ENCODE measurements at regions of chr10 and their contacts with region 1.

Region 1: DNA sequence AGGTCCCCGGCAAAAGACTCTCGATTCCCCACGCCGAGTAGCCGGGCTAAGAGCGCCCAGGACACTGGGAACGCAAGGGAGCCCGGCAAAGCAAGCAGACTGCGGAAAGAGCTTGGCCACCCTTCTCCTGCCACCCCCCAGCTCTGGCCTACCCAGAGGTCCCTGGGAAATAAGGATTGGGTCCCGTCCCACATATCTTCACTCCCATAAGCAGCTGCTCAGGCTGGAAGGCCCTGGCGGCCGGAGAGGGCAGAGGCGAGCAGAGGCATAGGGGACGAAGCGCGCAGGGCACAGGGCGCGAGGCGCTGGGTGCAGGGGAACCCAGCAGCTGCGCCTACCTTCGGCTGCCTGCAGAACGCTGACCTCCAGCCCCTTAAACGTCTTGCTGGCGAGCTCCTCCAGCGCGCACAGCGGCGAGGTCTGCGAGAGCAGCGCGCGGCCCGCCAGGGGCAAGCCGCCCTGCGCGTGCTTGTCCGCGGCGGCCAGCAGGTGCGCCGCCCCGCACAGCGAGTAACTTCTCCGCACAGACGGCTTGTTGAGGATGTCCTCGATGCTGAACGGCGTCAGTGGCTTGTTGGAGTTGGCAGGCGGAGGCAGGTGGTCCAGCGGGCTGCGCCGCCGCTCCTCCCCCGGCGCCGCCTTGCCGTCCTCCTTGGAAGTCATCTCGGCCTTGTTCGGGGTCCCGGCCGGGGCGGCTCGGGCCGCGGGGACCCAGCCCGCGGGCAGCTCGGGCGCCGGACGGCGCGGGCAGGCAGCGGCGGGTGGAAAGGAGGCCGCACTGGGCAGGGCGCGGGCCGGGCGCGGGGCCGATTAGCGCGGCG is 900 bp downstream of the LBX1 start:
- DNase-seq: no peak
- ATAC-seq: no peak
- H3K4me3 ChIP-seq: no peak overlapping the region
- H3K4me3 Mint-ChIP-seq: peak overlapping the region; percentile 42 to 80 (median 74)
- H3K27ac ChIP-seq: no peak overlapping the region
- H3K27ac Mint-ChIP-seq: peak overlapping the region in 1 of 9 donors; percentile 79
- H3K4me1 ChIP-seq: peaks cover 27 to 48% of the 10 kb centered on the region in 2 donors
- H3K4me1 Mint-ChIP-seq: peaks cover 26 to 52% (median 40%) of the 10 kb centered on the region in 7 donors
- H3K27me3 ChIP-seq: peaks cover 18 to 54% of the 10 kb centered on the region in 2 donors
- H3K27me3 Mint-ChIP-seq: peaks cover 71 to 78% (median 74%) of the 10 kb centered on the region in 5 donors

Region 2: GRCh38 chr10:100653957-100654781 is 574.2 kb before region 1 on chr10:
- CTCF ChIA-PET with region 1: no interaction called
- POLR2A ChIA-PET with region 1: no interaction called
- intact Hi-C with region 1: loop called in 1 of 2 experiments (anchors 10 kb)
- DNase-seq: peak in 1 of 9 donors; percentile 36
- ATAC-seq: peak; percentile 28
- H3K4me3 ChIP-seq: no peak overlapping the region
- H3K4me3 Mint-ChIP-seq: peak overlapping the region; percentile 64 to 92 (median 85)
- H3K27ac ChIP-seq: no peak overlapping the region
- H3K27ac Mint-ChIP-seq: no peak overlapping the region
- H3K4me1 ChIP-seq: peaks cover 4 to 16% of the 10 kb centered on the region in 2 donors
- H3K4me1 Mint-ChIP-seq: peaks cover 18 to 35% (median 27%) of the 10 kb centered on the region in 7 donors
- H3K27me3 ChIP-seq: peaks cover 19 to 27% of the 10 kb centered on the region in 2 donors
- H3K27me3 Mint-ChIP-seq: peaks cover 68 to 76% (median 75%) of the 10 kb centered on the region in 5 donors

Region 3: GRCh38 chr10:100827819-100828737 is 400.3 kb before region 1 on chr10:
- CTCF ChIA-PET with region 1: no interaction called
- POLR2A ChIA-PET with region 1: no interaction called
- intact Hi-C with region 1: loop called in 1 of 2 experiments (anchors 10 kb)
- DNase-seq: peak in 3 of 9 donors; percentile 18 to 36 (median 29)
- ATAC-seq: peak; percentile 37
- H3K4me3 ChIP-seq: peak overlapping the region; percentile 56
- H3K4me3 Mint-ChIP-seq: peak overlapping the region; percentile 85 to 97 (median 88)
- H3K27ac ChIP-seq: no peak overlapping the region
- H3K27ac Mint-ChIP-seq: peak overlapping the region in 2 of 9 donors; percentile 14 to 50
- H3K4me1 ChIP-seq: peaks cover 9% of the 10 kb centered on the region in 2 donors
- H3K4me1 Mint-ChIP-seq: peaks cover 25 to 45% (median 31%) of the 10 kb centered on the region in 7 donors
- H3K27me3 ChIP-seq: peaks cover 11 to 34% of the 10 kb centered on the region in 2 donors
- H3K27me3 Mint-ChIP-seq: peaks cover 26 to 86% (median 47%) of the 10 kb centered on the region in 5 donors

Region 4: DNA sequence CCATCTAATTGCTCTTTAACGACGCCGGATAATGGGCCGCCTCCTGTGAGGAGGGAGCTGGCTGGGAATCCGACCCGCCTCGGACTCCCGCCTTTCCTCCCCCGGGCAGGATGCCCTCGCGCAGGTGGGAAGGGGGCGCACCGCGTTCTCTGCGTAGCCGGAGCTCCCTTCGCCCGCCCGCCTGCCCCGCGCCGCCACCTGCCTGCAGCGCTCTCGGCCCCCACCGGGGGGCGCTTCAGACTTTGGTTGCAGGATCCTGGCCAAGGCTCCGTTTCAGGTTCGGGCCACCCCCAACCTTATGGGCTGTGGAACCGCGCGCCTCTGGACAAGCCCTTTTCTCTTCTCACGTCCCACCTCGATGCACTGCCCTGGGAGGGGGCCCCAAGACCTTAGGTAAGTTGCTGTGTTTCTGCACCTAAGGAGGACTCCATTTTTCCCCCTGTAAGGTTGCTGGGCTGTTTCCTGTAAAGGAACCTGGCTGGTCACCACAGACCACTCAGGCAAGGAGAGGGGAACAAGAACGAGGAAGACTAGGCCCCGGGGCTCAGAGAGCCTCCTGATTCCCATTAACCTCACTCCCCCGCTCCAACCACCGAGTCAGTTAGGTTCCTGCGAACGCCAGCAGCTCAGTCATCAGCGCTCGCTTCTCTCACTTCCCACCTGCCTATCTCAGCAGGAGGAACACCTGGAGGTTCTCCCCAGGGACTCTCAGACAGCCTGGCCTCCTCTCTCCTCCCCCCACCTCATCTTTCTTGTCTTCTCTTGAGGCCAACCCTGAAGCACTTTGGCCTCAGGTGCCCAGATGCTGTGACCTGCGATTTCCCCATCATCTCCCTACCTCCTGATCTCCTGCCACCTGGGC is 177.9 kb before region 1 on chr10:
- CTCF ChIA-PET with region 1: no interaction called
- POLR2A ChIA-PET with region 1: no interaction called
- intact Hi-C with region 1: loop called in 1 of 2 experiments (anchors 5 kb)
- DNase-seq: peak; percentile 60 to 88 (median 74)
- ATAC-seq: peak; percentile 93
- H3K4me3 ChIP-seq: no peak overlapping the region
- H3K4me3 Mint-ChIP-seq: peak overlapping the region in 7 of 10 donors; percentile 10 to 63 (median 55)
- H3K27ac ChIP-seq: no peak overlapping the region
- H3K27ac Mint-ChIP-seq: no peak overlapping the region
- H3K4me1 ChIP-seq: peaks cover 5 to 9% of the 10 kb centered on the region in 2 donors
- H3K4me1 Mint-ChIP-seq: peaks cover 13 to 30% (median 15%) of the 10 kb centered on the region in 7 donors
- H3K27me3 ChIP-seq: peaks cover 7 to 8% of the 10 kb centered on the region in 2 donors
- H3K27me3 Mint-ChIP-seq: peaks cover 38 to 54% (median 49%) of the 10 kb centered on the region in 5 donors